ENCODE measurements at regions of chr13 and their contacts with region 1.

Region 1: GRCh38 chr13:27362064-27362883 is 62.1 kb upstream of the GTF3A start:
- DNase-seq: peak; percentile 87 to 89 (median 88)
- ATAC-seq: peak; percentile 94 to 99 (median 98)
- H3K4me3 ChIP-seq: peak overlapping the region; percentile 32 to 57 (median 47)
- H3K27ac ChIP-seq: no peak overlapping the region
- H3K4me1 ChIP-seq: peaks cover 0 to 4% (median 0%) of the 10 kb centered on the region in 4 donors
- H3K27me3 ChIP-seq: no peaks in the 10 kb centered on the region
- CTCF ChIP-seq: peak; percentile 93 to 95 (median 94)
- POLR2A ChIP-seq: no peak

Region 2: DNA sequence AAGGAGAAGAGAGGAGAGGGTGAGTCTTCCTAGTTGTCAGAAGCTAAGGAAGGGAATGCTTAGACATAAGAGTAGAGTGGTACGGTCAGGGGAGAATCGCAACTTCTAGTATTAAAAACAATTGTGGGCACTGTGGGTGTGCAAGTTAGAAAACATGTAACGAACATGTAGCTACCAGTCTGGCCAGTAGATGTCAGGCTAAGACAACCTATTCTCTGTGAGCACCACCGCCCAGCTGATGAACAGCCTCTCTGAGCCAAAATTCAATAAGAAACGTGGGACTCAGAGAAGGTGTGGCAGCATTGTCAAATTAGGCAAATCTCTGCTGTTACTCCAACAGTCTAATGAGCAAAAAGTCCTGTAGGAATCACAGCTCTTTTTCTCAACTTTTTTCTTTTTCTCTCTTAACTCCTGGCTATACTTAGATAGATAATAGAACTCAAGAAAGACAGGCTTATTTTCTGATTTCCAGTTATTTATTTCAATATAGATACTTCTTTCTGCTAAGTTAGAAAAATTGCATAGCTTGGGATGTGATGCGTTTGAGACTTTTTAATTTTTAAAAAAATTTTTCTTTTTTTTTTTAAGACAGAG is 376.9 kb before region 1 on chr13:
- intact Hi-C with region 1: loop called (anchors 10 kb)
- DNase-seq: peak in 1 of 3 donors; percentile 73
- ATAC-seq: peak; percentile 48 to 71 (median 68)
- H3K4me3 ChIP-seq: no peak overlapping the region
- H3K27ac ChIP-seq: no peak overlapping the region
- H3K4me1 ChIP-seq: peaks cover 0 to 63% (median 19%) of the 10 kb centered on the region in 4 donors
- H3K27me3 ChIP-seq: no peaks in the 10 kb centered on the region
- CTCF ChIP-seq: peak; percentile 70 to 93 (median 78)
- POLR2A ChIP-seq: no peak

Region 3: GRCh38 chr13:26996965-26997752 is 365.1 kb before region 1 on chr13:
- intact Hi-C with region 1: loop called in 1 of 2 experiments (anchors 10 kb)
- DNase-seq: no peak
- ATAC-seq: peak in 1 of 4 donors; percentile 15
- H3K4me3 ChIP-seq: no peak overlapping the region
- H3K27ac ChIP-seq: no peak overlapping the region
- H3K4me1 ChIP-seq: peaks cover 0 to 18% (median 9%) of the 10 kb centered on the region in 4 donors
- H3K27me3 ChIP-seq: no peaks in the 10 kb centered on the region
- CTCF ChIP-seq: no peak
- POLR2A ChIP-seq: no peak

Region 4: GRCh38 chr13:27283906-27284493 is 78.3 kb before region 1 on chr13:
- intact Hi-C with region 1: loop called in 1 of 2 experiments (anchors 10 kb)
- DNase-seq: peak in 1 of 3 donors; percentile 34
- ATAC-seq: peak; percentile 78 to 92 (median 84)
- H3K4me3 ChIP-seq: no peak overlapping the region
- H3K27ac ChIP-seq: no peak overlapping the region
- H3K4me1 ChIP-seq: no peaks in the 10 kb centered on the region
- H3K27me3 ChIP-seq: no peaks in the 10 kb centered on the region
- CTCF ChIP-seq: peak; percentile 20 to 52 (median 34)
- POLR2A ChIP-seq: no peak

Region 5: GRCh38 chr13:27309967-27310598 is 52.2 kb before region 1 on chr13:
- intact Hi-C with region 1: no loop called
- DNase-seq: no peak
- ATAC-seq: no peak
- H3K4me3 ChIP-seq: no peak overlapping the region
- H3K27ac ChIP-seq: no peak overlapping the region
- H3K4me1 ChIP-seq: no peaks in the 10 kb centered on the region
- H3K27me3 ChIP-seq: no peaks in the 10 kb centered on the region
- CTCF ChIP-seq: no peak
- POLR2A ChIP-seq: no peak

Region 6: GRCh38 chr13:27826379-27827353 is 464.4 kb after region 1 on chr13:
- intact Hi-C with region 1: loop called (anchors 5 to 10 kb)
- DNase-seq: peak; percentile 75 to 85 (median 80)
- ATAC-seq: peak; percentile 86 to 96 (median 89)
- H3K4me3 ChIP-seq: no peak overlapping the region
- H3K27ac ChIP-seq: peak overlapping the region in 1 of 3 donors; percentile 33
- H3K4me1 ChIP-seq: peaks cover 0 to 10% (median 0%) of the 10 kb centered on the region in 4 donors
- H3K27me3 ChIP-seq: peaks cover 4 to 8% of the 10 kb centered on the region in 2 donors
- CTCF ChIP-seq: peak; percentile 86 to 97 (median 93)
- POLR2A ChIP-seq: no peak

Region 7: DNA sequence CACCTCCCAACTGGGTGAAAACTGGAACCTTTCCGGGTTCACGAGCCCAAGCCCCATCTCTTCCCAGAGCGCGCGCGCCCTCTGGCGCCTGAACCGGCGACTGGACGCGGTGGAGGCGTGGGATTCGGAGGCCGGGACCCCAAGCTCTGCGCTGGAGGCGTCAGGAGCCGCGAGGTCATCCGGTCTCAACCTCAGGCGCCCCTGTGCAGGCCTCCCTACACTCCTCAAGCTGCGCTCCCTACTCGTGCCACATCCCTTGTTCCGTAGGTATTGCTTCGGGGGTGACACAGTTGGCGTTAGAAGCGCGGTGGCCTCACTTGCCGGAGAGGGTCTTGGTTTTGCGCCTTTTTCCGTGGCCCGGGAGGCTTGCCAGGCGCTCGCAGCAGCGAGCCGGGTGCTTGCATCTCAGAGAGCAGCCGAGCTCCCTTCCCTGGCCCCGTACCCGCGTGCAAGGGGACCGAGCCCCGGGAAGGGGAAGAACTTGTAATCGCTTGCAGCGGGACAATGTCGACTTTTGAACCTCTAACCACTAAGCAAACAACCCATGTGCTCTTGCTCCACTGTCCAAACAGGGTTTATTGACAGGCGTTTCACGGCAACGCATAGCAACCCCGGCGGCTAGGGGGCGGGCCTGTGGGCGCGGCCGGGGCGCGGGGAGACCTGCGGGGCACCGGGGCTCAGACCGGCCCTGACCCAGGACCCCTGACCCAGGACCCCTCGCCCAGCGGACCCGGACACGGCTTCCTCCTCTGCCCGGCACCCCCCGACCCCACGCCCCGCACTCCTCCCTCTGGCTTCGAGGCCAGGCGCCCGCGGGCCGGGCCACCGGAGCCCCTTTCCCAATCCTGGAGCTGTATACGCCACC is 598.3 kb after region 1 on chr13:
- intact Hi-C with region 1: loop called in 1 of 2 experiments (anchors 10 kb)
- DNase-seq: peak; percentile 82 to 91 (median 87)
- ATAC-seq: peak; percentile 92 to 94 (median 93)
- H3K4me3 ChIP-seq: peak overlapping the region; percentile 45 to 63 (median 60)
- H3K27ac ChIP-seq: peak overlapping the region; percentile 40 to 84 (median 80)
- H3K4me1 ChIP-seq: peaks cover 0 to under 1% (median 0%) of the 10 kb centered on the region in 4 donors
- H3K27me3 ChIP-seq: no peaks in the 10 kb centered on the region
- CTCF ChIP-seq: peak; percentile 72 to 86 (median 76)
- POLR2A ChIP-seq: peak; percentile 52

Region 8: DNA sequence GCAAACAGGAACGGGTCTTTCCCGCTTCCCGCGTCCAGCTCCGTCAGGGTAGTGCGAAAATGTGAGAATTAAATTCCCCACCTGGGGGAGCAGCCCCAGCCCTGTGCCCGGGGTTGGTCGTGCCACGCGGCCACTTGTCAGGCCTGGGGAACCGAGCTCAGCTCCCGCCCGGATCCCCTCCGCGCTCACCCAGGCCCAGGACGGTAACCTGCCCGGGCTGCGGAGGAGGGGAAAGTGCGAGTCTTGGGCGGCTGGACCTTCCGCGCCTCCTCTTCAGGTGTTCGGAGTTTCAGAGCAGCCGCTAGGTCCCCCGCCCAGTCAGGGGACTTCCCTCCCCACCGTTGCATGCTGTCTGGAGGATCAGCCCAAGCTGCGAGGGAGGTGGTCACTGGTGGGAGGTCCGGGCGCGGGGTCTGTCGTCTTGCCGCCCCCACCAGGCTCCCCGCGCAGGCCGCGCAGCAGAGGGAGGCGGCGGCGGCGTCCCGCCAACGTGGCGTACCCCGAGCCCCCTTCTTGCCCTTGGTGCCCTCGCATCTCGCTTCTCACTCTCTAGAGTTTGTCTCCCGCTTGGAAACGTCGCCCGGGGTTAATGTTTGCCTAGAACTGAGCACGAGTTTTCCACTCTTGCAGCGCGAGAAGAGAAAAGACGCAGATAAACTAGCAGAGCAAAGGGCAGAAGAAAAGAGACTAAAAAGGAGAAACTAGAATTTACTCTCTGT is 618.2 kb after region 1 on chr13:
- intact Hi-C with region 1: loop called in 1 of 2 experiments (anchors 10 kb)
- DNase-seq: peak in 1 of 3 donors; percentile 52
- ATAC-seq: peak; percentile 45 to 72 (median 56)
- H3K4me3 ChIP-seq: no peak overlapping the region
- H3K27ac ChIP-seq: no peak overlapping the region
- H3K4me1 ChIP-seq: peaks cover 0 to 21% (median 4%) of the 10 kb centered on the region in 4 donors
- H3K27me3 ChIP-seq: peaks cover 12 to 50% of the 10 kb centered on the region in 2 donors
- CTCF ChIP-seq: no peak
- POLR2A ChIP-seq: no peak

Measured in right lobe of liver (tissue), 6 donors.